Heart left ventricle (tissue), 16 donors: ENCODE measurements at regions of chr14 and their contacts with region 1.

Region 1: DNA sequence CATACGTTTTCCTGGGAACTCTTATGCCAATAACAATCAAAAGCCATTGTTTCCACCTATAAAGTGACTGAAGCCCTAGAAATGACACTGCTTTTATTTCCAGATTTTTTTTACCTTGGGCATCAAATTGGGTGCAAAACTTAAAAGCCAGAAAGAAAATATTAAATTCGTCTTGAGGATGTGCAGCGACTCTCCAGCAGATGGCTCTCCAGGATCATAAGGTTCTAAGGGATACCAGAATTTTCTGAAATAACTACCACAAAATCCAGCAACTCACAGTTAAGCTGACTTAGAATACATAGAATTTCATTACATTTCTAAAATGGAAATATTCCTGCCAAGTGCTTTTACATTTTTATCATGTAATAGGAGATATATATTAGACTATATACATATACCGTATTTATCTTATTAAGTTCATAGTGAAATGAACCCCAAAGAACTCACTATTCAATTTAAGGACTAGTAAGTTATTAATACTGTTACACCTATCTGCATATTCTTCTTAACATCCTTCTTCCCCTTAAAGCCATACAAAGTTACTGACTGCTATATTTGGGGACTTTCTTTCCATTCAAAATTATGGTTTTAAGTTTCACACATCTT is 44.0 kb downstream of the ARMH4 start:
- DNase-seq: peak in 3 of 5 donors; percentile 31 to 36 (median 31)
- ATAC-seq: peak in 1 of 4 donors; percentile 39
- H3K4me3 ChIP-seq: no peak overlapping the region
- H3K27ac ChIP-seq: no peak overlapping the region
- H3K4me1 ChIP-seq: peaks cover 0 to 17% (median 6%) of the 10 kb centered on the region in 12 donors
- H3K27me3 ChIP-seq: no peaks in the 10 kb centered on the region
- CTCF ChIP-seq: peak; percentile 71 to 87 (median 82)
- POLR2A ChIP-seq: no peak

Region 2: GRCh38 chr14:58152014-58152857 is 44.2 kb after region 1 on chr14 and contains the start of gene ARMH4:
- intact Hi-C with region 1: loop called in 1 of 10 experiments (anchors 5 kb)
- DNase-seq: peak; percentile 84 to 92 (median 91)
- ATAC-seq: peak; percentile 98 to 99 (median 99)
- H3K4me3 ChIP-seq: peak within 1 kb of the TSS; percentile 62 to 96 (median 88)
- H3K27ac ChIP-seq: peak within 1 kb of the TSS in 11 of 12 donors; percentile 12 to 76 (median 60)
- H3K4me1 ChIP-seq: peaks cover 0 to 19% (median 8%) of the 10 kb centered on the region in 12 donors
- H3K27me3 ChIP-seq: peaks cover 0 to 31% (median 0%) of the 10 kb centered on the region in 9 donors
- CTCF ChIP-seq: peak in 9 of 12 donors; percentile 11 to 49 (median 31)
- POLR2A ChIP-seq: peak; percentile 57 to 97
- total RNA-seq, gene ARMH4: 4.7 to 13.4 (median 10.0) TPM

Region 3: DNA sequence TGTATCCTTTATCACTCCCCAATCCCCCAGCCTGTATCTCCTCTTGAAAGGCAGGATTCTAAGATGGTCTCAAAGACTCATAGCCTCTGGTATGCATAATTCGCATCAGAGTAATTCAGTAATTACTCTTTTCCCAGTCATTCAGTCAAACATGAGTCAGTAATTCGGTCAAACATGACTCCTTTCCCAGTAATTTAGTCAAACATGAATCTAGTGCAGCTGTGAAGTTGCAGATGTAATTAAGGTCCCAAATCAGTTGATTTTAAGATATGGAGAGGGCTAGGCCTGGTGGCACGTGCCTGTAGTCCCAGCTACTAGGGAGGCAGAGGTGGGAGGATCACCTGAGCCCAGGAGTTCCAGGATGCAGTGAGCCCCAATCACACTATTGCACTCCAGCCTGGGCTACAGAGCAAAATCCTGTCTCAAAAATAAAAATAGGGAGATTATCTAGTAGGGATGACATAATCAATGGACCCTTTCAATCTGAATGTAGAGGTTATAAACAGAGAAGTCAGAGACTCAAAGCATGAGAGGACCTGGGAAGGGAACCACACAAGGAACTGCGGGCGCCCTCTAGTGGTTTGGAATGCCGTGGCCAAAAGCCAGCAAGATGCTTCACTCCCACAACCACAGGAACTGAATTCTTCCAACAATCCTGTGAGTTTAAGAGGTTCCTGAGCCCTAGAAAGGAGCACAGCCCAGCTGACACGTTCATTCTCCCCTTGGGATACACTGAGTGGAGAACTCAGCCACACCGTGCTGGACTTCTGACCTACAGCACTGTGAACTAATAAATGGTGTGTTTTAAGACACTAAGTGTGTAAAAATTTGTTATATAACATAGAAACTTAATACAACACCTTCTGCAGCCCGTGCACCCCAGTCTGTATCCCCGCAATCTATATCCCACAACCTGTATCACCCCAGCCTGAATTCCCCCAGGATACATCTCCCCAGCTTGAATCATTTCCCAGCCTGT is 58.2 kb after region 1 on chr14:
- intact Hi-C with region 1: loop called (anchors 1 to 5 kb)
- DNase-seq: peak; percentile 74 to 90 (median 81)
- ATAC-seq: peak; percentile 42 to 82 (median 76)
- H3K4me3 ChIP-seq: no peak overlapping the region
- H3K27ac ChIP-seq: no peak overlapping the region
- H3K4me1 ChIP-seq: peaks cover 0 to 5% (median 0%) of the 10 kb centered on the region in 12 donors
- H3K27me3 ChIP-seq: no peaks in the 10 kb centered on the region
- CTCF ChIP-seq: peak; percentile 79 to 96 (median 91)
- POLR2A ChIP-seq: no peak

Region 4: DNA sequence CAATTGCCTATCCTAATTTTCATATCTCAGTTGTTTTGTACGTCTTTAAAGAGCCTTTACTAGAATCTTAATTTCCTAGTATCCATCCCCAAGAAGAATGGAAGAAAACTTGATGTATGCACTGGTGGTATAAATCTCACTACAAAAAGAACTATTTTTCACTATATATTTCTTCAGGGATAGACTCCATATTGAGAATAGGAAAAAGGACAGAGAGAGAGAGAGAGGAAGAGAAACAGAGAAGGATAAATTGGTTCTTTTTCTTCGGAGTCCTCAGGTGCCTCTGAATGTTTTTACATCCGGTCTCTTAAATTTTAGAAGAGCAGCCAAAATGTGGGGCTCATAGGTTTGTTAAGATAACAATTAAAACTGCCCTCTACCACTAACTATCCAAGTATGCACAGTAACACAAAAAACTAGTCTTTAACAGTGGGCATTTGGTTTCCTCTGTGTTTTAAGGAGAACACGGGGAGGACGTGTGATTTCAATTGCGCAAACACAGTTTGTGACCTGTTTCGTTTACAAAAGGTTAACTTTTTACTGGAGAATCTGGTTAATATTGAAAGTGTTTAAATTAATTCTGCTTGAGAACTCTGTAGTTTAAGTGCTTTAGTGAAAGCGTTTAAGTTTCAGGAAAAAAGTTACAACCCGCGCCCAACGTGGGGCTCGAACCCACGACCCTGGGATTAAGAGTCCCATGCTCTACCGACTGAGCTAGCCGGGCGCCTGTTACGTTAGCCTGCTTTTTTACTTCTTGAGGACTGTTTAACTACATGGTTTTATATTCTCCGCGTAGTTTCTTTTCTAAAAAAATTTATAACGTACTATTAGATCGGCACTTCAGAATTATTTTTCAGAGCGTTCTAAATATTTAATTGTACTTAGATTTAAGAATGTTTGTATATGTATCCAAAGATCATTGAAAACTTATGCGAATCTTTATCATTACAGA is 131.5 kb after region 1 on chr14:
- intact Hi-C with region 1: loop called in 1 of 10 experiments (anchors 5 kb)
- DNase-seq: peak; percentile 63 to 83 (median 70)
- ATAC-seq: peak; percentile 27 to 46 (median 35)
- H3K4me3 ChIP-seq: peak overlapping the region; percentile 48 to 74 (median 65)
- H3K27ac ChIP-seq: peak overlapping the region; percentile 19 to 85 (median 76)
- H3K4me1 ChIP-seq: peaks cover 0 to 24% (median 3%) of the 10 kb centered on the region in 12 donors
- H3K27me3 ChIP-seq: no peaks in the 10 kb centered on the region
- CTCF ChIP-seq: no peak
- POLR2A ChIP-seq: no peak

Region 5: DNA sequence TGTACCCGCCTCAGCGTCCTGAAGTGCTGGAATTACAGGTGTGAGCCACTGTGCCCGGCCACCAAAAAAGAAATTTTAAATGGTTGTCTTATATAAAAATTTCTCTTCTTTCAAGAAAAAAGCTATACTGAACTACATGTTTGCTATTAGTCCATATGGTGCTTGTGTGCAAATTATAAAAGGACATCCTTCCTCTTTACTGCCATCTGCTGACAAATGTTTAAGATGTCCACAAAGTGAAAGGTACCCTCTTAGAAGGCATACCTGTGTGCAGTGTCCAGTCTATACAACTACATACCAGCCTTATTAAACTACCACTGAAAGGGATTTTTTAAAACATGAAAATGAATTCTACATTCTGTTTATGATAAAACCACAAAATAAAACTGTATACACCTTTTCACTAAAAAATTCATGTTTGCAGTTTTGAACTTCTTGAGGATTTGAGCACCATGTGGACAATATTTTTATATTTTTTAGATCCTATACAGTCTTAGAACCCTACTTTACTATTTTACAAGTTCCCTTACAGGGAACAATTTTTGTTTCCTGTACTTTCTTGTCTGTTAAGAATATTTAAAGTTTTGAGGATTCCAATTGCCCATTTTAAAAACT is 254.9 kb after region 1 on chr14:
- intact Hi-C with region 1: loop called in 5 of 10 experiments (anchors 5 to 10 kb)
- DNase-seq: no peak
- ATAC-seq: no peak
- H3K4me3 ChIP-seq: no peak overlapping the region
- H3K27ac ChIP-seq: no peak overlapping the region
- H3K4me1 ChIP-seq: peaks cover 0 to 6% (median 0%) of the 10 kb centered on the region in 12 donors
- H3K27me3 ChIP-seq: no peaks in the 10 kb centered on the region
- CTCF ChIP-seq: peak in 9 of 12 donors; percentile 7 to 44 (median 19)
- POLR2A ChIP-seq: no peak

Region 6: GRCh38 chr14:58395812-58396788 is 288.1 kb after region 1 on chr14 and contains the start of gene TOMM20L:
- intact Hi-C with region 1: loop called in 1 of 10 experiments (anchors 2 kb)
- DNase-seq: peak; percentile 71 to 89 (median 78)
- ATAC-seq: peak; percentile 42 to 96 (median 91)
- H3K4me3 ChIP-seq: peak within 1 kb of the TSS; percentile 35 to 78 (median 58)
- H3K27ac ChIP-seq: peak within 1 kb of the TSS; percentile 25 to 80 (median 76)
- H3K4me1 ChIP-seq: peaks cover 0 to 13% (median 5%) of the 10 kb centered on the region in 12 donors
- H3K27me3 ChIP-seq: no peaks in the 10 kb centered on the region
- CTCF ChIP-seq: peak; percentile 60 to 98 (median 88)
- POLR2A ChIP-seq: no peak
- total RNA-seq, gene TOMM20L: not detected